ENCODE measurements at regions of chr19 and their contacts with region 1.

Region 1: DNA sequence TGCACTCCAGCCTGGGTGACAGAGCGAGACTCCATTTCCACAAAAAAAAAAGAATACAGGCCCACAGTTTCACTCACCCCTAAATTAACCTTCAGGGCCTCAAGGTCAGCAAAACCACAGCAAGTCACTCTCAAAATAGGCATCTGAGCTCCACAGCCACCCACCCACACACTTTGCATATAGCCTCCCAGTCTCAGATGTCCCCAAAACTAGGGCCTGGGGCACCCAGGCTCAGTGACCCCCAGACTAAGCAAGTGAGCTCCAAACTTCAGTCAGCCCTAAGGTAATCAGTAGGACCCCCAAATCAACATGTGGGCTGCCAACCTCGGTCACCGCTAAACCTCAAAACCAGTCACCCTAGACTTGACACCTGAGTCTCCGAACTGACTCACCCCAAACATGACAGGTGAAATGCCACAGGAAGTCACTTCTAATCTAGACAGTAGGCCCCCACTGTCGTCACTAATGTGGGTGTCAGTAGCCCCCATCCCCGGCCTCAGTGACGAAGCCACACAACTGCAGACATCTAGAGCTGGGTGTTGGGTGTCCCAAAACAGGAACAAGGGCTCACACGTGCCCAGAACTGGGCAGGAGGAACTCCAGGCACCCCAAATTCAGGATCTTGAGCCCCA is 13.9 kb downstream of the RABAC1 start:
- DNase-seq: peak; percentile 99
- ATAC-seq: peak; percentile 87
- H3K4me3 Mint-ChIP-seq: peak overlapping the region; percentile 56
- H3K27ac Mint-ChIP-seq: peak overlapping the region; percentile 94
- H3K4me1 Mint-ChIP-seq: peaks cover 61% of the 10 kb centered on the region
- H3K27me3 Mint-ChIP-seq: peaks cover 8% of the 10 kb centered on the region
- CTCF ChIP-seq: no peak

Region 2: GRCh38 chr19:41866284-41866683 is 79.0 kb before region 1 on chr19:
- CTCF ChIA-PET with region 1: interaction called, 110 read pairs
- POLR2A ChIA-PET with region 1: interaction called, 62 read pairs
- intact Hi-C with region 1: loop called (anchors 5 kb)
- DNase-seq: no peak
- ATAC-seq: peak; percentile 32
- H3K4me3 Mint-ChIP-seq: peak overlapping the region; percentile 23
- H3K27ac Mint-ChIP-seq: peak overlapping the region; percentile 79
- H3K4me1 Mint-ChIP-seq: peaks cover 85% of the 10 kb centered on the region
- H3K27me3 Mint-ChIP-seq: no peaks in the 10 kb centered on the region
- CTCF ChIP-seq: no peak

Region 3: DNA sequence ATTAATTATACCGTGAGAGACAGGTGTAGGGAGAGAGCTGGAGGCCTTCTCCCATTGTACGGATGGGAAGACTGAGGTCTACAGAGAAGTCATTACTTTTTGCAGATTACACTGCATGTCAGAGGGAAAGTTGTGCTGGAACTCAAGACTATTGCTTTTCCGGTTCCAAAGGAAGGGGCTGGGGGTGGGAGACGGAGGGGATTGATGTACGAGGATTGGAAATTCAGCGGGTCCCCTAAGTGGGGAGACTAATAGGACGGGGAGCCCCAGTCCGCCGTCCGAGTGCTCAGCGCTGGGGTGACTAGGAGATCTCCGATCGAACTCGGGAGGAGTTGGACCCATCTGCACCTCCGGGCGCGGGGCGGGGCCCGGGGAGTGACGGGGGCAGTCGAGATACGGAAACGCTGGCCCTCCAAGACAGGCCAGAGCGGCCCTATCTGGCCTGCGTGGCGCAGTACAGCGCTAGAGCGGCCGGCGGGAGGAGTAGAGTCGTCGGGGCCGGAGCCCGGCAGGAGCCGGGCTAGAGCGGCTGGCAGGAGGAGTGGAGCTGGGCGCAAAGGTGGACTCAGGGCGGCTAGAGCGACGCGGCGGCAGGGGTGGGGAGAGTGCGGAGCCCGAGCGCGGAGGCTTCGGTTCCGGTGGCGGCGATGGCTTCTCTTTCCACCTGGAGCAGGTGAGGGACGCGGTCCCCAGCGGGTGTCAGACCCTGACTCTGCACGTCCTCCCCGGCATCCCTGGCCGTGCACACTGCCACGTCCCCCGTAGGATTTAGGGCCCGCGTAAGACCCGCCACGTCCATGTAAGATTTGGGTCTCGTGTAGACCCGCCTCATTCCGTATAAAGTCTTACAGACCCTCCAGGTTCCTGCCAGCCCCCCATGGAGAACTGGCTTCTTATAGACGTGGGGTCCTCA is 61.2 kb before region 1 on chr19:
- CTCF ChIA-PET with region 1: interaction called, 34 read pairs
- POLR2A ChIA-PET with region 1: interaction called, 78 read pairs
- intact Hi-C with region 1: loop called (anchors 5 kb)
- DNase-seq: peak; percentile 94
- ATAC-seq: peak; percentile 73
- H3K4me3 Mint-ChIP-seq: peak overlapping the region; percentile 73
- H3K27ac Mint-ChIP-seq: peak overlapping the region; percentile 94
- H3K4me1 Mint-ChIP-seq: peaks cover 50% of the 10 kb centered on the region
- H3K27me3 Mint-ChIP-seq: no peaks in the 10 kb centered on the region
- CTCF ChIP-seq: no peak

Region 4: DNA sequence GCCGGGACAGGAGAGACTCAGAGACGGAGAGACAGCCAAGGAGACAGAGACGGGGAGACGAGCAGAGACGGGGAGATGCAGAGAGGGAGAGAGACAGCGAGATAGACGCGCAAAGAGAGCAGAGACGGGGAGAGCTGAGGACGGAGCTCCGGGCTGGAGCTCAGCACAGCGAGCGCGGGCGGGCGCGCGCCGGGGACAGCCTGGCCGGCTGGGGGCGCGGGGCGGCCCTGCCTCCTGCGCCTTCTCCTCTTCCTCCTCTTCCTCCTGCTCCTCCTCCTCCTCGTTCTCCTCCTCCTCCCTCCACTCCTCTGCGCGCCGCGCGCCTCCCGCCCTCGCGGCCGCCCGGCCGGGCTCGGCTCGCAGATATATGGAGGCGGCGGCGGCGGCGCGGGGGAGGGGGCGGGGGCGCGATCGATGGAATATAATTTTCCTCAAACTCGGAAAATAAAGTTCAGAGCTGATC is 17.0 kb before region 1 on chr19 and contains the start of gene ERFL:
- CTCF ChIA-PET with region 1: interaction called, 20 read pairs
- POLR2A ChIA-PET with region 1: interaction called, 7 read pairs
- intact Hi-C with region 1: no loop called
- DNase-seq: peak; percentile 47
- ATAC-seq: peak; percentile 41
- H3K4me3 Mint-ChIP-seq: peak within 1 kb of the TSS; percentile 75
- H3K27ac Mint-ChIP-seq: peak within 1 kb of the TSS; percentile 72
- H3K4me1 Mint-ChIP-seq: peaks cover 25% of the 10 kb centered on the region
- H3K27me3 Mint-ChIP-seq: peaks cover 9% of the 10 kb centered on the region
- CTCF ChIP-seq: no peak
- total RNA-seq, gene ERFL: 1.5 to 1.6 TPM

Region 5: GRCh38 chr19:41959056-41960053 is 14.1 kb after region 1 on chr19 and contains the start of gene RABAC1:
- CTCF ChIA-PET with region 1: interaction called, 18 read pairs
- POLR2A ChIA-PET with region 1: interaction called, 13 read pairs
- intact Hi-C with region 1: no loop called
- DNase-seq: peak; percentile 94
- ATAC-seq: peak; percentile 89
- H3K4me3 Mint-ChIP-seq: peak within 1 kb of the TSS; percentile 82
- H3K27ac Mint-ChIP-seq: peak within 1 kb of the TSS; percentile 84
- H3K4me1 Mint-ChIP-seq: peaks cover 16% of the 10 kb centered on the region
- H3K27me3 Mint-ChIP-seq: no peaks in the 10 kb centered on the region
- CTCF ChIP-seq: peak; percentile 55
- total RNA-seq, gene RABAC1: 49.6 to 52.4 TPM

Region 6: GRCh38 chr19:41969772-41970458 is 24.7 kb after region 1 on chr19:
- CTCF ChIA-PET with region 1: no interaction called
- POLR2A ChIA-PET with region 1: no interaction called
- intact Hi-C with region 1: no loop called
- DNase-seq: no peak
- ATAC-seq: no peak
- H3K4me3 Mint-ChIP-seq: no peak overlapping the region
- H3K27ac Mint-ChIP-seq: no peak overlapping the region
- H3K4me1 Mint-ChIP-seq: peaks cover 3% of the 10 kb centered on the region
- H3K27me3 Mint-ChIP-seq: no peaks in the 10 kb centered on the region
- CTCF ChIP-seq: no peak

Region 7: GRCh38 chr19:42010245-42011126 is 65.2 kb after region 1 on chr19:
- CTCF ChIA-PET with region 1: no interaction called
- POLR2A ChIA-PET with region 1: no interaction called
- intact Hi-C with region 1: no loop called
- DNase-seq: no peak
- ATAC-seq: no peak
- H3K4me3 Mint-ChIP-seq: no peak overlapping the region
- H3K27ac Mint-ChIP-seq: peak overlapping the region; percentile 29
- H3K4me1 Mint-ChIP-seq: peaks cover 4% of the 10 kb centered on the region
- H3K27me3 Mint-ChIP-seq: no peaks in the 10 kb centered on the region
- CTCF ChIP-seq: no peak